HEK293T (cell line): ENCODE measurements at regions of chr20 and their contacts with region 1.

Region 1: DNA sequence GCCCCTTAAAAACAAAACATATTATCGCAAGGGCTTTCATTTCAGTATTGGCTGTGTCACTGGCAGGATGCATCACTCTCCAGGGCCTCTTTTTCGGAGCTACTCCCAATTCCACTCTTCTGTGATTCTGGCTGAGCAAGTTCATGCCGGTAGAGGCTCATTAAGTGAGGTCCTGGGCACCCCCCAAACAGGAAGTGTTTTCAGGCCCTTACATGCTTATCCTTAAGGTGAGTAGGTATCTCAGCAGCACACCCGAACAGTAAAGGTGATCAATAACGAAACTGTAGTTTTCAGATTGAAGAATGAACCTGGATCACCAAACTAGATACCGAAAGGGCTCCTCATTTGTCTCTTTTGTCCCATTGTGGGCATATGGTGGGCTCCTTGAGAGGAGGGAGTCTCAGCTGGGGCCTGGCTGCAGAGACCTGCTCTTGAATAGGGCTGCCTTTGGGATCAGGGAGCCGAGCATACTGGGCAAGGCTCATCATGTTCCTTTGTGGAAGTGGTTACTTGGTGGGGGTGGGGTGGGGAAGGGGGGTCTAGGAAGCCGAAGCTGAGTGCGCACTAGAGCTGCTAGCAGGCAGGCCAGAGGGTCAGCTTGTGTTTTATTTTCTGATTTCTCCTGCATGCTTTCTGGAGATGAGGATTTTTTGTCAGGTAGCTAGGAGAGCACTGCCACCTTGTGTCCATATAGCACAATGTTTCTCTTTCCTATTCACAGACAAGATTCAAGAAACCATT is 65.2 kb downstream of the CDS2 start:
- DNase-seq: peak; percentile 71

Region 2: DNA sequence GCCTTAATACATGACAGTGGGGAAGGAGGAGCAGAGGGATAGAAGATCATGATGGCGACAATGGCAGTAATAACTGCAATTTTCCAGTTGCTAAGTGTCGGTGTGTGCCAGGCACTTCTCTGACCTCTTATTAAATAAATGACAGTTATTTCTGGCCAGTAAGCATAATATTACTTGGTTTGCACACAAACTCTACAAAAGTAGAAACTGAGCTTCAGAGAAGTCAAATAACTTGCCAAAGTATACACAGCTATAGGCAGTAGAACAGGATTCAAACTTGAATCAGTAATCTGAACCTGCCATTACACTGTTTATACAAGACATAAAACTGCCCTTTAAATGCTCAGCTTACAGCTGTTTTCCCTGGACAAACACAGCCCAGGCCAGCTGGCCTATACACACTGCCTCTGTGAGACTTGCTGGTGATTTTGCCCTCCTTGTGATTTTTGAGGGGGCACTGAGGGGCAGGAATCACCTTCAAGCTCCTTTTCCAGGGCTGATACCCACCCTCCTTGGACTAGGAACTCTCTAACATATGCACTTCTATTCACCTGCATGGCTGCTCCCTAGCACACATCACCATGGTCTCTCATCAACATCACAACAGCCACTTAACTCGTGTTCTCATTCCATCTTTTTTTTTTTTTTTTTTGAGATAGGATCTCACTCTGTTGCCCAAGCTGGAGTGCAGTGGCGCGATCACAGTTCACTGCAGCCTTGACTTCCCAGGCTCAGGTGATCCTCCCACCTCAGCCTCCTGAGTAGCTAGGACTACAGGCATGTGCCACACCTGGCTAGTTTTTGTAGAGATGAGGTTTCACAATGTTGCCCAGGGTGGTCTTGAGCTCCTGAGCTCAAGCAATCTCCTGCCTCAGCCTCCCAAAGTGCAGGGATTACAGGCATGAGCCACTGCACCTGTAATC is 254.3 kb before region 1 on chr20:
- CTCF ChIA-PET with region 1: no interaction called
- POLR2A ChIA-PET with region 1: no interaction called
- DNase-seq: no peak

Region 3: DNA sequence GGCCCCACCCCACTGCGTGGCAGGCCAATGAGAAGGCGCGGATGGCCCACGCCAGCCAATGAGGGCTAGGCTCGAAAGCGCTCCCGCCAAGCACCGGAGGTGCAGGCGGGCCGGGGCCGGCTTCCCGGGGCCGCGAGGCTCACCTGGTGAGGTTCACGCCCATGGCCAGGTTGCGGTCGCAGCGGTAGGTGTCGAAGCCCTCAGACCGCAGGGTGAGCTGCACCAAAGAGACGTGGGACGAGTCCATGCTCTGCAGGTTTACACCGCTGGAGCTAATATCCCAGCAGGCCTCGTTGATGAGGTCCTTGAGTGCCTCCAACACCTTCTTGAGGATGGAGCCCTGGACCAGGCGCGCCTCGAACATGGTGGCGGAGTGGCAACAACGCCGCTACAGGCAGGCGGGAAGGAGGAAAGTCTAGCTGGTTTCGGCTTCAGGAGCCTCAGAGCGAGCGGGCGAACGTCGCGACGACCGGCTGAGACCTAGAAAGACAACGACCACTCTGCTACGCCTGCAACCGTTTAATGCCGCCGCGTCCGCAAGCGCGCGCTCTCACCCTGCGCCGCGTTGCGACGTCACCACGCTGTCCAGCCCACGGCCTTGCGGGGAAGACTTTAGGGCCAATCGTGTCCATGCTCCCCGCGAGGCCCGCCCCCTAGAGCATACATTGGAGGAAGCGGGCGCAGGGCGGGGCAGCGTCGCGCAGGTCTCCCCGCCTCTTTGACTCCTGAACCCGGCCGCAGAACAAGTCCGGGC is 72.4 kb before region 1 on chr20 and contains the start of gene PCNA:
- CTCF ChIA-PET with region 1: interaction called, 7 read pairs
- POLR2A ChIA-PET with region 1: interaction called, 20 read pairs
- DNase-seq: peak; percentile 90

Region 4: DNA sequence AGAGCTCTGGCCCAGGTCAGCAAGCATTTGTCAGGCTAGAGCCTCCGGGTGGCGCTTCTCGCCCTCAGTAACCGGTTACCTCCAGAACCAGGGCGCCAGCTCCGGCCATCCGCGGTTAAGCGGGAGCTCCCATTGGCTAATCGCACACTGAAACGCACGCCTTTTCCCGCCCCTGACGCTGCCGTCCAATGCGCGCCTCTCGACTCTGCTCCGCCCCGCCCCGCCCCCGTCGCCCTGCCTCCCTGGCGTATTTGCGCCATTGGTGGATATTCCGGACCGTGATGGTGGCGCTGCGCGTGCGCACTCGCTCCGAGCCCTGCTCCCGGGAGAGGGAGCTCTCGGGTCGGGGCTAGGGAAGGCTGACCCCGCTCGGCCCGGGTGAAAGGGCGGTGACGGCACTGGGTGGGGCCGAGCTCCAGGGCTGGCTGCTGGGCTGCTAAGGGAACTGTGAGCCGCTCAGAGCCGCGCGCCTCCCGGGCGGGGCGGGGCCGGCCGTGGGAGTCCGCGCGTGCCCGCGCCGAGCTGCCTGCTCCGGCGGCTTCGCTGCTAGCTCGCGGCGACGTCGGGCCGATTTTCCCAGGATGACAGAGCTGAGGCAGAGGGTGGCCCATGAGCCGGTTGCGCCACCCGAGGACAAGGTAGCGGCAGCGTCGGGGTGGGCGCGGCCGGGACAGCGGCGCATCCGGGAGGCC is 65.3 kb before region 1 on chr20 and contains the start of gene CDS2:
- CTCF ChIA-PET with region 1: interaction called, 25 read pairs
- POLR2A ChIA-PET with region 1: interaction called, 14 read pairs
- DNase-seq: peak; percentile 92